ENCODE measurements at regions of chr19 and their contacts with region 1.

Region 1: DNA sequence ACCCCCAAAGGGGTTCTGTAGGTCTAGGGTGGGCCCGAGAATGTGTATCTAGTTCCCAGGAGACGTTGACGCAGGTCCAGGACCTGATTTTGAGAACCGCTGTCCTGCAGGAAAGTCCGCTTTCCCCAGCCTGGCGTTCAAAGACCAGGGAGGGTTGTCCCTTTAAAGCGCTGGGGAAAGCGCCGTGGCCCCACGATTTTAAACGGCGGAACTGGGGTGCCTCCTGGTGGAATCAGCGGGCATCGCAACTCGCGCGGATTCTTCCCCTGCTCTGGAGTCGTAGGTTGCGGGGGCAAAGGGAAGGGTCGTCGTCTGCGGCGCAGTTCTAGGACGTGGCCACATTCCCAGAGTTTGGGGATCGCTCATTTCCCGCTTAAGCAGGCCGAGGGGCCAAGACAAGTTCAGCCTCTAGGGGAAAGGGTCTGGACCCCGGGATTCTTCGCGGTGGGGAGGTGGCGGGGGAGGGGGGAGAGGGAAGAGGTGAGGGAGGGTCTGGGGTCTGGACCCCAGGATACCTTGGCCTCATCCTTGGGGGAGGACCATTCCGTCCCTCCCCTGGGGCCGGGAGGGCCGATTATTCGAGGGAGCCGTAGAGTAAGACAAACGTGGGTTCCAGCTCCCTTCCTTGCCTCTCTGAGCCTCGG is 7.7 kb downstream of the PNMA8B start:
- DNase-seq: peak; percentile 86
- H3K4me3 Mint-ChIP-seq: peak overlapping the region; percentile 10
- H3K27ac Mint-ChIP-seq: no peak overlapping the region
- H3K4me1 Mint-ChIP-seq: peaks cover 10% of the 10 kb centered on the region
- H3K27me3 Mint-ChIP-seq: peaks cover 85% of the 10 kb centered on the region
- CTCF ChIP-seq: peak; percentile 96

Region 2: DNA sequence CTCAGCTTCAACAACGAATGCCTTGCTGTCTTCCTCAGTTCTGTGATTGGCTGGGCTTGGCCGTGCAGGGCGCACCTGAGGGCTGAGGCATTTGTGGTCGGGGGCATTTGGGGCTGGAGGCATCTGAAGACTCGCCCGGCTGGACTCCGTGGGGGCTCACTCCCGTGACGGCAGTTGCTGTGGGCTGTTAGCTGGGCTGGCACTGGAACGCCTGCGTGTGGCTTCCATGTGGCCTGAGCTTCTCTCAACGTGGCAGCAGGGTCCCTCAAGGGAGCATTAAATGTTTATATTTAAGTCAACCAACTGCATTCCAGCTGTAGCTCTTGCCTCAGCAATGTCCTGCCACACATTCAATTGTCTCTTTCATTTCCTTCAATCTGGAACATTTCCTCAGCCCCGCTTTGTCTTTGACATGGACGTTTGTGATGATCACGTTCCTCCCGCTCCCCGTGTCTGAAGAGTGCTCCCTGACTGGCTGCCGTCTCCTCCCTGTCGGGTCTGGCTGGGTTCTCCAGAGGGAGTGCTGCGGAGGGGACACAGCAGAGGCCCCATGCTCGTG is 95.6 kb before region 1 on chr19:
- CTCF ChIA-PET with region 1: interaction called, 6 read pairs
- intact Hi-C with region 1: loop called (anchors 2 kb)
- DNase-seq: no peak
- H3K4me3 Mint-ChIP-seq: no peak overlapping the region
- H3K27ac Mint-ChIP-seq: no peak overlapping the region
- H3K4me1 Mint-ChIP-seq: no peaks in the 10 kb centered on the region
- H3K27me3 Mint-ChIP-seq: no peaks in the 10 kb centered on the region
- CTCF ChIP-seq: no peak

Region 3: GRCh38 chr19:46404055-46404752 is 83.7 kb before region 1 on chr19:
- CTCF ChIA-PET with region 1: interaction called, 8 read pairs
- intact Hi-C with region 1: loop called (anchors 2 kb)
- DNase-seq: peak; percentile 64
- H3K4me3 Mint-ChIP-seq: peak overlapping the region; percentile 80
- H3K27ac Mint-ChIP-seq: peak overlapping the region; percentile 78
- H3K4me1 Mint-ChIP-seq: peaks cover 28% of the 10 kb centered on the region
- H3K27me3 Mint-ChIP-seq: peaks cover 36% of the 10 kb centered on the region
- CTCF ChIP-seq: peak; percentile 46

Region 4: GRCh38 chr19:46661020-46661731 is 173.3 kb after region 1 on chr19 and contains the start of gene DACT3:
- CTCF ChIA-PET with region 1: no interaction called
- intact Hi-C with region 1: no loop called
- DNase-seq: peak; percentile 100
- H3K4me3 Mint-ChIP-seq: peak within 1 kb of the TSS; percentile 70
- H3K27ac Mint-ChIP-seq: peak within 1 kb of the TSS; percentile 84
- H3K4me1 Mint-ChIP-seq: peaks cover 9% of the 10 kb centered on the region
- H3K27me3 Mint-ChIP-seq: peaks cover 71% of the 10 kb centered on the region
- CTCF ChIP-seq: no peak
- total RNA-seq, gene DACT3: not detected in 2 replicates

Measured in Calu3 (cell line).